Left ventricle myocardium superior (tissue), 1 donor: ENCODE measurements at regions of chr11 and their contacts with region 1.

Region 1: GRCh38 chr11:47800759-47801158 is 33.6 kb upstream of the FNBP4 start:
- DNase-seq: no peak
- ATAC-seq: peak; percentile 97

Region 2: DNA sequence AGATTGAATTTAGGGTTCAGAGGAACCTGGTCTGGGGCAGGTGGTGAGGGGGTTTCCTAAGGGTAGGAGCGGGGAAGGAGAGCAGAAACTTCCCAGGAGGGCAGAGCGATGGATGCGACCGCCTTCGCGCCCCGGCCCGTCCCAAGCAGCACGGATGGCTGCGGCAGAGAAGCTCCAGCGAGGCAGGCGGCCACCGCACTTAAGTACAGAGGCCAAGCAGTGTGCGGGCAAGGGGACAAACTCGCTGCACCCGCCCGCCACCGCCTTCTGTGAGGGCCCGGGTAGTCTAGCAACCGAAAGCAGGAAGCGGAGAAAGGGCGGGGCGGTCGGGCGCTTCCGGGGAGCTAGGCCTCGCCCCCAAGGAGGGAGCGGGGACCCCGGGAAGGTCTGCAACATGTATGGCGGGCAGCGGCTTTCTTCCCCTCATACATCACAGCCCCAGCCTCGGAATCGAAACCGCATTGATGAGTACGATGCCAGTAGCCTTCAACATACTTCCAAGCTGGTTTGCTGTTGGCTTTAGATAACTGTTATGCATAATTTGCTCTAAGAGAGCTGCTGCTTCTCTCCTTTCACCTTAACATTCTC is 85.6 kb before region 1 on chr11 and contains the start of gene AGBL2:
- intact Hi-C with region 1: no loop called
- DNase-seq: peak; percentile 86
- ATAC-seq: peak; percentile 94
- total RNA-seq, gene AGBL2: 0.25 TPM

Region 3: GRCh38 chr11:47731475-47731874 is 69.3 kb before region 1 on chr11:
- intact Hi-C with region 1: loop called (anchors 10 kb)
- DNase-seq: no peak
- ATAC-seq: no peak